ENCODE measurements at regions of chr5 and their contacts with region 1.

Region 1: GRCh38 chr5:746258-746761 is 38.2 kb downstream of the ZDHHC11B start:
- DNase-seq: no peak
- ATAC-seq: peak; percentile 85
- H3K4me3 ChIP-seq: no peak overlapping the region
- H3K27ac ChIP-seq: no peak overlapping the region
- H3K4me1 ChIP-seq: no peaks in the 10 kb centered on the region
- H3K27me3 ChIP-seq: peaks cover 2 to 12% of the 10 kb centered on the region in 2 experiments; a peak in 1 of 5 replicates
- CTCF ChIP-seq: no peak
- EP300 ChIP-seq: no peak
- POLR2A ChIP-seq: no peak
- RAD21 ChIP-seq: no peak

Region 2: DNA sequence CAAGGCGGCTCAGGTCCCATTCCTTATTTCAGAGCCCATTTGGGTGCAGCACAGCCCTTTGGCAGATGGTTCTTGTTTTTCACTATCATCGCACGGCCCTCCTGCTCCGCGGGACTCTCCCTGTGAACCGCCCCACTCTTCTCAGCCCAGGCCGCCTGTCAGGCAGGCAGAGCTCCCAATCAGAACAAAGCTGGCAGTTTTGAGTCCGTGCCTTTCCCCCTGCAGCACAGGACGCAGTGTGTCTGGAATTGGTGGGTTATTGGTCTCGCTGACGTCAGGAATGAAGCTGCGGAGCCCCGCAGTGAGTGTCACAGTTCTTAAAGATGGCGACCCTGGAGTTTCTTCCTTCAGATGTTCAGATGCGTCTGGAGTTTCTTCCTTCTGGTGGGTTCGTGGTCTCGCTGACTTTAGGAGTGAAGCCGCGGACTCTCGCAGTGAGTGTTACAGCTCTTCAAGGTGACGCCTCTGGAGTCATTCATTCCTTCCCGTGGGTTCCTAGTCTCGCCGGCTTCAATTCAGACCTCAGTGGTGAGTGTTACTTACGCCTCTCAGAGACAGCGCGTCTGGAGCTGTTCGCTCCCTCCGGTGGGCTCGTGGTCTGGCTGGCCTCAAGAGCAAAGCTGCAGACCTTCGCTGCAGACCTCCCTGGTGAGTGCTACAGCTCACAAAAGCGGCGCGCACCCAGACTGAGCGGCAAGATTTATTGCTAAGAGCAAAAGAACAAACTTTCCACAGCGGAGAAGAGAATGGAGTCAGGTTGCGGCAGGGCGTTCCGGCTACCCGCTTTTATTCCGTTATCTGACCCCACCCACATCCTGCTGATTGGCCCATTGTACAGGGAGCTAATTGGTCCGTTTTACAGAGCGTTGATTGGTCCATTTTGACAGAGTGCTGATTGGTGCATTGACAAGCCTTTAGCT is 30.7 kb after region 1 on chr5:
- CTCF ChIA-PET with region 1: no interaction called
- POLR2A ChIA-PET with region 1: no interaction called
- in situ Hi-C with region 1: no loop called
- intact Hi-C with region 1: no loop called
- DNase-seq: no peak
- ATAC-seq: no peak
- H3K4me3 ChIP-seq: no peak overlapping the region
- H3K27ac ChIP-seq: no peak overlapping the region
- H3K4me1 ChIP-seq: no peaks in the 10 kb centered on the region
- H3K27me3 ChIP-seq: peaks cover 16 to 22% of the 10 kb centered on the region in 2 experiments
- CTCF ChIP-seq: no peak
- EP300 ChIP-seq: no peak
- POLR2A ChIP-seq: no peak
- RAD21 ChIP-seq: no peak

Region 3: GRCh38 chr5:801472-801871 is 55.2 kb after region 1 on chr5:
- CTCF ChIA-PET with region 1: no interaction called
- POLR2A ChIA-PET with region 1: no interaction called
- in situ Hi-C with region 1: no loop called
- intact Hi-C with region 1: no loop called
- DNase-seq: no peak
- ATAC-seq: no peak
- H3K4me3 ChIP-seq: no peak overlapping the region
- H3K27ac ChIP-seq: no peak overlapping the region
- H3K4me1 ChIP-seq: no peaks in the 10 kb centered on the region
- H3K27me3 ChIP-seq: no peaks in the 10 kb centered on the region; a peak in 1 of 5 replicates
- CTCF ChIP-seq: no peak
- EP300 ChIP-seq: no peak
- POLR2A ChIP-seq: no peak
- RAD21 ChIP-seq: no peak

Region 4: GRCh38 chr5:849651-850301 is 103.5 kb after region 1 on chr5:
- CTCF ChIA-PET with region 1: no interaction called
- POLR2A ChIA-PET with region 1: no interaction called
- in situ Hi-C with region 1: loop called (anchors 5 kb)
- intact Hi-C with region 1: no loop called
- DNase-seq: peak; percentile 92
- ATAC-seq: peak; percentile 86
- H3K4me3 ChIP-seq: peak overlapping the region; percentile 31 to 71 (median 43); a peak in 5 of 6 replicates
- H3K27ac ChIP-seq: peak overlapping the region; percentile 37
- H3K4me1 ChIP-seq: peaks cover 39% of the 10 kb centered on the region
- H3K27me3 ChIP-seq: peaks cover 1 to 17% of the 10 kb centered on the region in 2 experiments; a peak in 3 of 5 replicates
- CTCF ChIP-seq: no peak
- EP300 ChIP-seq: peak in 1 of 2 experiments; percentile 37; a peak in 1 of 4 replicates
- POLR2A ChIP-seq: peak in 1 of 2 experiments; percentile 79; a peak in 2 of 4 replicates
- RAD21 ChIP-seq: no peak

Region 5: GRCh38 chr5:1374680-1375055 is 628.4 kb after region 1 on chr5:
- CTCF ChIA-PET with region 1: no interaction called
- POLR2A ChIA-PET with region 1: no interaction called
- in situ Hi-C with region 1: no loop called
- intact Hi-C with region 1: no loop called
- DNase-seq: no peak
- ATAC-seq: no peak; the same call in 2 of the 3 replicates
- H3K4me3 ChIP-seq: no peak overlapping the region
- H3K27ac ChIP-seq: no peak overlapping the region
- H3K4me1 ChIP-seq: no peaks in the 10 kb centered on the region
- H3K27me3 ChIP-seq: peaks cover 8 to 70% of the 10 kb centered on the region in 2 experiments
- CTCF ChIP-seq: no peak
- EP300 ChIP-seq: no peak
- POLR2A ChIP-seq: no peak
- RAD21 ChIP-seq: no peak